Caco-2 (cell line): ENCODE measurements at regions of chr4 and their contacts with region 1.

Region 1: GRCh38 chr4:44927399-44928380 is 201.3 kb upstream of the GNPDA2 start:
- DNase-seq: peak in 1 of 2 experiments; percentile 21
- H3K4me3 ChIP-seq: no peak overlapping the region
- H3K4me3 Mint-ChIP-seq: no peak overlapping the region
- H3K27ac Mint-ChIP-seq: no peak overlapping the region
- H3K4me1 ChIP-seq: no peaks in the 10 kb centered on the region
- H3K4me1 Mint-ChIP-seq: no peaks in the 10 kb centered on the region
- H3K27me3 ChIP-seq: no peaks in the 10 kb centered on the region
- H3K27me3 Mint-ChIP-seq: peaks cover 2% of the 10 kb centered on the region
- CTCF ChIP-seq: peak; percentile 43 to 45

Region 2: DNA sequence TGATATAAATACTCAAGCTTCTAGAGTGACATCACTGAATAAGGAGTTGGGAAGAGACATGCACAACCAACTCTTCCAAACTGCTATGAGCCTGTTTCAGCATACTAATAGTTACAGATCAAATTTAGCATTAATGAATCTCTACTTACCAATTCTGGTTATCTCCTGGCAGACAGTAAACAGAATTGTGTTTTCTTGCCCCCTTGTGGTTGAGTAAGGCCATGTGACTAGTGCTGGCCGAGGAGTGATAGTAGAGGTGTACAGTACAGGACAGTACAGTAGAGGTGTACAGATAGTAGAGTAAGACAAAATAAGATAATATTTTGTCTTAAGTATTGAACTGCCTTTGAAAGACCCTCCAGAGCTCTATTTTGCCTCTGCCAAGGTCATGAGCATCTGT is 514.8 kb after region 1 on chr4:
- CTCF ChIA-PET with region 1: no interaction called
- POLR2A ChIA-PET with region 1: no interaction called
- intact Hi-C with region 1: loop called (anchors 1 kb)
- DNase-seq: peak in 1 of 2 experiments; percentile 24
- H3K4me3 ChIP-seq: no peak overlapping the region
- H3K4me3 Mint-ChIP-seq: no peak overlapping the region
- H3K27ac Mint-ChIP-seq: no peak overlapping the region
- H3K4me1 ChIP-seq: no peaks in the 10 kb centered on the region
- H3K4me1 Mint-ChIP-seq: no peaks in the 10 kb centered on the region
- H3K27me3 ChIP-seq: no peaks in the 10 kb centered on the region
- H3K27me3 Mint-ChIP-seq: peaks cover 4% of the 10 kb centered on the region
- CTCF ChIP-seq: peak; percentile 34 to 39